ENCODE measurements at regions of chr9 and their contacts with region 1.

Region 1: DNA sequence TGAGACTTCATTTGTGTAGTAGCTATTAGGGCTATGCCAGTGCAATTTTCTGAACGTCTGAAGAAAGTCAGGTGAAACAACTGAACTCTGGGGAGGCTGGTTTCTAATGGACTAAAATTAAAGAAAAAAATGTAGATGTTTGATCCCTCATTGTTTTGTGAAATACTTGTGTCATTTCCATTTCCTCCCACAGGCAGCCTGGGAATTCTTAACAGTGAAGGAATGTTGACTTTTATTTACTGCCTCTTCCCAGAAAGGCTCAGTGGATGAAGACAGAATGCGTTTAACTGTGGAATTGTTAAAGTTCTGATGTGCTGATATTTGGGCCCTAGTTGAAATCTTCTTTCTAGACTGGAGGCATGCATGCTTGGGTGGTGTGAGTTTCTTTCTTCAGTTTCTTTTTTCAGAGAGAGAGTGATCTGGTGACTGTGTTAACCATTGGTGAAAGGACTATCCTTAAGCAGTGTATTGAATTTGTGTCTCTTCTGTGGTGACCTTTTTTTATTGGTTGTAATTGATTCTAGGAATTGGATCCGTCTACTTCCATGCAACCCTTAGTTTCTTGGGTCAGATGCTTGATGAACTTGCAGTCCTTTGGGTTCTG is 15.5 kb downstream of the ACER2 start:
- DNase-seq: no peak
- H3K4me3 ChIP-seq: no peak overlapping the region
- CTCF ChIP-seq: no peak

Region 2: DNA sequence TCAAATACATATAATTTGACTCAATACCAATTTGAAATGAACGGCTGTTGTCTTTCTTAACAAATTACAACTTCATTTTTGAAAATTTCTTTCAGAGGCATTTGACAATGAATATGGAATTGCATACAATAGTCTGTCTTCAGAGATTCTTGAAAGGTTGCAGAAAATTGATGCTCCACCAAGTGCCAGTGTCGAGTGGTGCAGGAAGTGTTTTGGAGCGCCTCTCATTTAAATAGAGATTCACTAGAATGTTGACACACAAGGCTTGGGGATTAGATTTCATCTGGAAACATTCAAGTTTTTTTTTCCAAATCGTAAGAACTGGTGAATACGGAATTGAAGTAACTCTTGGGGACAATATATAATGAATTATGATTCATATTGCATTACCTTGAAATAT is 52.3 kb before region 1 on chr9:
- in situ Hi-C with region 1: loop called (anchors 5 kb)
- DNase-seq: no peak
- H3K4me3 ChIP-seq: no peak overlapping the region
- CTCF ChIP-seq: no peak

Measured in astrocyte of the cerebellum (primary cell).